ENCODE measurements at regions of chr1 and their contacts with region 1.

Region 1: GRCh38 chr1:114428083-114428749 is 82.8 kb downstream of the TRIM33 start:
- DNase-seq: peak; percentile 32
- H3K4me3 ChIP-seq: no peak overlapping the region
- H3K27ac ChIP-seq: no peak overlapping the region
- H3K4me1 ChIP-seq: peaks cover 9% of the 10 kb centered on the region
- H3K27me3 ChIP-seq: no peaks in the 10 kb centered on the region
- CTCF ChIP-seq: peak; percentile 72

Region 2: DNA sequence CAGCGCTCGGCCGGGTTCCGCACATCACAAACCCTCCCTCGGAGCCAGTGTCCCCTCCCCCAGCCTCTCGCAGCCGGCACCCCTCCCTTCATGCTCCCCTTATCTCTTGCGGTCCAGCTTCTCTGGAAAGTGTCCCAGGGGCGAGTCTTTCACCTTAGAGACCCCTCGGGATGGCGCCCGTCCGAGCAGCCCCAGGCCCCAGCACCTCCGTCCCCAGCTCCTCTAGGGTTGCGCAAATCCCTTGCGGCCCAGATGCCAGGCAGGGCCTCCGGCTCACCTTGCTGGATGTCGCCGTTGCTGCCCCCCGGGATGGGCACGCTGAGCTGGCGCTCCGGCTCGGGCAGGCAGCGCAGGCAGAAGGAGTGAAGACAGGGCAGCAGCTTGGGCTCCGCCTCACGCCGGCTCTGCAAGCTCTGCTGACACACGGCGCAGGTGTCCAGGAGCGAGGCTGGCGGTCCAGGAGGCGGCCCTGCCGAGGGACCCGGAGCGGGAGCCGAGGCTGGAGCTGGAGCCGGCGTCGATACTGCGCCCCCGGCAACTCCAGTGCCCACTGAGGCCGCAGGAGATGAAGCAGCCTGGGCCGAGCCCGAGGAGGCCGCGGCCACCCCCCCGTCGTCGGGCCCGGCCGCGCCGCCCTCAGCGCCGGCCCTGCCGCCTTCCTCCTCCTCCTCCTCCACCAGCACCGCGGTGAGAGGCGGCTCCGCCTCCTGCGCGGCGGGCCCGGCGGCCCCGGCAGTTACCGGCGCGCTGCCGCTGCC is 82.2 kb after region 1 on chr1:
- CTCF ChIA-PET with region 1: no interaction called
- POLR2A ChIA-PET with region 1: interaction called, 20 read pairs
- intact Hi-C with region 1: no loop called
- DNase-seq: peak; percentile 32
- H3K4me3 ChIP-seq: peak overlapping the region; percentile 83
- H3K27ac ChIP-seq: peak overlapping the region; percentile 92
- H3K4me1 ChIP-seq: peaks cover 17% of the 10 kb centered on the region
- H3K27me3 ChIP-seq: no peaks in the 10 kb centered on the region
- CTCF ChIP-seq: no peak